ENCODE measurements at regions of chr7 and their contacts with region 1.

Region 1: DNA sequence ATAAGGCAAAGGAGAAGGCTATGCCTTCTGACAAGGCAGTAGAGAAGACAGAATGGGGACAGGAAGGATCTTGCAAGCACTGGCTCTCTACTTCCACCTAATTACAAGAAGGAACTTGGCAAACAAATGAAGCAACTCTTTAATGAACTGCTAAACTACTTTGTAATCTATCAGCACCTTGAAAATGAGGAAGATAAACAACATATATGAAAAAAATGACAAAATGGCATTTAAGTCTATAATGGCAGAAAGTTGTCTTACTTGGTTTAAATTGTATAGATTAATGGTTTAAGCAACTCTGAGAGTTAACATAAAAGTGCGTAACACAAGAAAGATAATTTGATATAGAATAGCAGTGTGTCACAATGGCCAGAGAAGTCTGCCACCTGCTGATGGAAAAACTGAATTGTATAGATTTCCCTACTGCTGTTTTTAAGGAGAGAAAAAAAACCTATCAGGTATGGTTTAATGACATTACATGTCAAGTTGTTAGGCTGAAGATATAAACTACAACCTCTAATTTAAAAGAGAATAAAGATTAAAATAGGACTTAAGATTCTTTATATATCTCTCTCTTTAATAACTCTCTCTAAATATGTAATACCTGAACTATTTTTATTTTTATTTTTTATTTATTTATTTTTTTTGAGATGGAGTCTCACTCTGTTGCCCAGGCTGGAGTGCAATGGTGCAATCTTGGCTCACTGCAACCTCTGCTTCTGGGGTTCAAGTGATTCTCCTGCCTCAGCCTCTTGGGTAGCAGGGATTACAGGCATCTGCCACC is 11.8 kb downstream of the NT5C3A start:
- DNase-seq: peak; percentile 82
- H3K4me3 Mint-ChIP-seq: no peak overlapping the region
- H3K27ac Mint-ChIP-seq: no peak overlapping the region
- H3K4me1 Mint-ChIP-seq: peaks cover 36% of the 10 kb centered on the region
- H3K27me3 Mint-ChIP-seq: no peaks in the 10 kb centered on the region

Region 2: GRCh38 chr7:32765185-32765584 is 285.5 kb before region 1 on chr7:
- intact Hi-C with region 1: loop called (anchors 1 kb)
- DNase-seq: no peak
- H3K4me3 Mint-ChIP-seq: no peak overlapping the region
- H3K27ac Mint-ChIP-seq: no peak overlapping the region
- H3K4me1 Mint-ChIP-seq: peaks cover 4% of the 10 kb centered on the region
- H3K27me3 Mint-ChIP-seq: peaks cover 66% of the 10 kb centered on the region

Region 3: DNA sequence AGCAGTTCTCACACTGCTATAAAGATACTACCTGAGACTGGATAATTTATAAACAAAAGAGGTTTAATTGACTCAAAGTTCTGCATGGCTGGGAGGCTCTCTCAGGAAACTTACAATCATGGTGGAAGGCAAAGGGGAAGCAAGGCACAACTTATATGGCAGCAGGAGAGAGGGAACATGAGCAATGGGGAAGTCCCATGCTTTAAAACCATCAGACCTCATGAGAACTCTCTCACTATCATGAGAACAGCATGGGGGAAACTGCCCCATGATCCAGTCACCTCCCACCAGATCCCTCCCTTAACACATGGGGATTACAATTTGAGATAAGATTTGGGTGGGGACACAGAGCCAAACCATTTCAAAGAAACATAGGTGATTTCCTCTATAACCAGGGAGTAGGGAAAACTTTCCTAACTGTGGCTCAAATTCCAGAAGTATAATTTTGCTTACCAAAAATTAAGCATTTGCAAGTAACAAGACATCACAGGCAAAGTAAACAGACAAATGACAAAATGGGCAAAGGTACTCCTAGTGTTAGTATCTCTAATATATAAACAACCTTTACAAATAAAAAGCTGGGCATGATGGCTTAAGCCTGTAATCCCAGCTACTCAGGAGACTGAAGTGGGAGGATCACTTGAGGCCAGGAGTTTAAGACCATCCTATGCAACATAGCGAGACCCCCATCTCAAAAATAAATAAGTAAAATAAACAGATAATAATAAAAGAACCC is 247.2 kb before region 1 on chr7:
- intact Hi-C with region 1: loop called (anchors 2 kb)
- DNase-seq: no peak
- H3K4me3 Mint-ChIP-seq: no peak overlapping the region
- H3K27ac Mint-ChIP-seq: no peak overlapping the region
- H3K4me1 Mint-ChIP-seq: no peaks in the 10 kb centered on the region
- H3K27me3 Mint-ChIP-seq: peaks cover 5% of the 10 kb centered on the region

Region 4: DNA sequence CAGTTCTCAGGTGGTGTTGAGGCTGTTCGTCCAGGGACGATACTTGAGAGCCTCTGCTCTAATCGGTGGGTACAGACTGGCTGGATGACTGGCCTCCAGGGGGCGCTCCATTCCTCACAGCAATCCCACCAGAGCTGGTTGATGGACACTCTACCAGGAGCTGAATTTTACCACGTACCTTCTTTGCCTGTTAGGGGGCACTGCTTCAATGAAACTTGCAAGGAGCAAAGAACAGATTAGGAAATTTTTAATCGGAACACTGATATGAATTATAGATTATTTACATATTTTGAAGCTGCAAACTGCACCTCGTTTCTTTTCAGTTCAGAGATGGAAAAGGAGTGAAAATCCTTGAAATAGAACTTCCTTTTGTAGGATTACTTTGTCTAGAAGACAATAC is 204.0 kb before region 1 on chr7:
- intact Hi-C with region 1: loop called (anchors 2 kb)
- DNase-seq: peak; percentile 95
- H3K4me3 Mint-ChIP-seq: peak overlapping the region; percentile 26
- H3K27ac Mint-ChIP-seq: no peak overlapping the region
- H3K4me1 Mint-ChIP-seq: peaks cover 9% of the 10 kb centered on the region
- H3K27me3 Mint-ChIP-seq: peaks cover 27% of the 10 kb centered on the region

Region 5: DNA sequence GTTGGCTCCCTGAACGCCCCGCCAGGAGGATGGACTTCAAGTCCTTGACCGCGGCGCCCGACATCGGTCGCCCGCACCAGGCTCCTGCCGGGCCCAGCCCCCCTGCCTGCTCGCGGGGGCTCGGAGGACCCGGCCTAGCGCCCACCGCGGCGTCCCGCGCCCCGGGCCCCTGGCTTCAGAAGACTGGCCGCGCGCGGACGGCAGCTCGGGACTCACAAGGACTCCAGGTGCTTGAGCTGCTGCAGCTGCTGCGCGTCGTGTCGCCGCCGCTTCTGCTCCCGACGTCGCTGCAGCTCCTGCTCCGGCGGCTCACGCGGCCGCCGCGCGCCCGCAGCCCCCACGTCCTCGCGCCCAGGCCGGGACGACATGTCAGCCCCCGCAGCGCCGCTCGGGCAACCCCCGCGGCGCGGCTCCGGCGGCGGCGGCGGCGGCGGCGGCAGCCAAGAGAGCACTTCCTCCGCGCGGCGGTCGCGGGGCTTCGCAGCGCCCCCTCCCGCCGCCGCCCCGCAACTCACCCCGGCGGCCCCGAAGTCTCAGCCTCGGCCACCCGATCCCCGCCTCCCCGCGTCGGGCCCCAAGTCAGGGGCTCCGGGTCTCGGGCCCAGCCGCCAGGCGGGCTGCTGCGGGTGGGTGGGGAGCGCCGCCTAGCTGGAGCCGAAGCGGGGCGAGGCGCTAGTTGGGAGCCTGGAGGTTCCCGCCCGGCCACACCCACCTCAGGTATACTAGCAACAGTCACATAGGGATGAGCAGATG is 58.5 kb after region 1 on chr7 and contains the start of gene RP9:
- intact Hi-C with region 1: no loop called
- DNase-seq: peak; percentile 94
- H3K4me3 Mint-ChIP-seq: peak within 1 kb of the TSS; percentile 97
- H3K27ac Mint-ChIP-seq: peak within 1 kb of the TSS; percentile 84
- H3K4me1 Mint-ChIP-seq: peaks cover 25% of the 10 kb centered on the region
- H3K27me3 Mint-ChIP-seq: peaks cover 28% of the 10 kb centered on the region
- total RNA-seq, gene RP9: 23.2 and 25.1 TPM in 2 replicates